ENCODE measurements at regions of chr11 and their contacts with region 1.

Region 1: GRCh38 chr11:95661162-95661561 is 128.4 kb downstream of the FAM76B start:
- DNase-seq: no peak
- H3K4me3 Mint-ChIP-seq: no peak overlapping the region
- H3K27ac Mint-ChIP-seq: no peak overlapping the region
- H3K4me1 Mint-ChIP-seq: peaks cover 27% of the 10 kb centered on the region
- H3K27me3 Mint-ChIP-seq: no peaks in the 10 kb centered on the region

Region 2: DNA sequence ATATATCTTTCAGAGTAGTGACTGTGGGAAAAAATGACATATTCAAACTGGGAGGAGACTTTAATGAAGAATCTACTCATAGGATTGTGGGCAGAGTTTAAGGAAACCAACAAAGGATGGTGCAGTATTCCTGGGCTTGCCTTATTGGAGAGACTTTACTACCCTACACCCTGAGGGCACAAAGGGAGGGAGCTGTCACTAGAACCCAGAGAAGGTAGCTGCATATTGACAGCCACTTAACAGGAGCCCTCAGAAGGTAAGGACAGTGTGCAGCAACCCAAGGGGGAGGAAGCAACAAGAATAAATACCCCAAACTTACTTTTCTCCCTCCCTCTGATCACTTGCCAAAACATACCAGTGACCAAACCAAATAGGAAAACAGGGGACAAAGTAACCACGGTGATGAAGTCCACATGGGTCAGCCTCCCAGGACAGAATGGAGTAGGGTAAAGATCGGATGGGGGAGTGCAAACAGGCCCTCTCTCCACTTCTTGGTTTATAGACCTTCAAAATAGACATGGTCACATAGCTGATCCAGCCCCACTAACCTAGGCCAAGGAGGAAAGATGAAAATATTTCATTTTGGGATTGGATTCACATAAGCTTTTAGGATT is 308.3 kb before region 1 on chr11:
- intact Hi-C with region 1: no loop called
- DNase-seq: no peak
- H3K4me3 Mint-ChIP-seq: no peak overlapping the region
- H3K27ac Mint-ChIP-seq: no peak overlapping the region
- H3K4me1 Mint-ChIP-seq: no peaks in the 10 kb centered on the region
- H3K27me3 Mint-ChIP-seq: peaks cover 19% of the 10 kb centered on the region

Region 3: DNA sequence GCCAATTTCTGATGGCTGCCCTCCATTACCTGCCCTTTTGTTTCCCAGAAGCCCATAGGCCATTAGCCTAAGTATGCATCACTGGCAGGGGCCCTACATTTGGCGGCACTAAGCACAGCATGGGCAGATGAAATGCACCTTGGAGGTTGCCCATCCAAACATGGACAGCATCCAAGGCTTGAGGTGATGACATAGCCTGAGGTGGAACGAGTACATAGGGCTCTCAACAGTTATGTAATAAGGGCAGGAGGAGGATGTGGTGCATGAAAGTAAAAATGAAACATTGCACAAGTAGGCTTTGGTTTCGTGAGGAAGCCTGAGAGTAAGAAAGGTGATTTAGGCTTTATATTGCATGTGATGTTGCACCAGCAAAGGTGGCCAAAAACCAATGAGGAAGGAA is 19.7 kb before region 1 on chr11:
- intact Hi-C with region 1: loop called (anchors 2 kb)
- DNase-seq: peak; percentile 47
- H3K4me3 Mint-ChIP-seq: no peak overlapping the region
- H3K27ac Mint-ChIP-seq: peak overlapping the region; percentile 70
- H3K4me1 Mint-ChIP-seq: peaks cover 24% of the 10 kb centered on the region
- H3K27me3 Mint-ChIP-seq: no peaks in the 10 kb centered on the region

Region 4: GRCh38 chr11:95671768-95672167 is 10.6 kb after region 1 on chr11:
- intact Hi-C with region 1: loop called (anchors 1 kb)
- DNase-seq: no peak
- H3K4me3 Mint-ChIP-seq: no peak overlapping the region
- H3K27ac Mint-ChIP-seq: no peak overlapping the region
- H3K4me1 Mint-ChIP-seq: peaks cover 27% of the 10 kb centered on the region
- H3K27me3 Mint-ChIP-seq: no peaks in the 10 kb centered on the region

Region 5: GRCh38 chr11:95688580-95689189 is 27.5 kb after region 1 on chr11:
- intact Hi-C with region 1: loop called (anchors 2 kb)
- DNase-seq: peak; percentile 34
- H3K4me3 Mint-ChIP-seq: no peak overlapping the region
- H3K27ac Mint-ChIP-seq: no peak overlapping the region
- H3K4me1 Mint-ChIP-seq: peaks cover 26% of the 10 kb centered on the region
- H3K27me3 Mint-ChIP-seq: no peaks in the 10 kb centered on the region

Region 6: DNA sequence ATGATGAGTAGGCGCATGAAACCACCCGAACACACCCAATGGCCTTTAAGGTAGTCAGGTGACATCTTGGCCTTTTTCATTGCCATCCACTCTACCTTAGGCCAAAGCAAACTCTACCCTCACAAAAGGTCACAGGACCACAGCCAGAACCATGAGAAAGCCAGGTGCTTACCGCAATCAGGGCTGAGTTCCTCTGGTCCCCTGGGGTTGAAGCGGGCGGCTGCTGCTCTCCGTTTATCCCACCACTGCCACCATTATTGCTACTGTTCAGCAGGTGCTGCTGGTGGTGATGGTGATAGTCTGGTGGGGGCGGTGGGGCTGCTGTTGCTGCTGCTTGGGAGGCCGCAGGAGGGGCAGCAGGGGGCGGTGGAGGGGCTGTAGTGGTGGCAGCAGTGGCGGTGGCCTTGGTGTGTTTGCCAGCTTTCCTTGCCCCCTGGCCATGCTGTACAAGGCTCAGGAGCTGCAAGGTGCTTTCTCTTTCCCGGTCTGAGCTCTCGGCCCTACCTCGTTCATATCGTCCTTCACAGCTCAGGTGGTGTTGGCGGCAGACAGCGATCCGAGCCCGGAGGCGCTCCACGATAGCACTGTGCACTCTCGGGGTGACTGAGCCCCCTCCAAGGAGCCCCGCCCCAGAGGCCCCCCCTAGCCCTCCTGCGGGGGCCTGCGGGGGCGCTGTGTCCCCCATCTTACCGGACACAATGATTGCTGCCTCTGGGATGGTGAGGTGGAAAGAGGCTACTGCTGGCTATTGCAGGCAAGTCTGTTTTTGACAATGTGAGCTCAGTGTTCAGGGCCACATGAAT is 680.2 kb after region 1 on chr11:
- intact Hi-C with region 1: no loop called
- DNase-seq: peak; percentile 65
- H3K4me3 Mint-ChIP-seq: peak overlapping the region; percentile 94
- H3K27ac Mint-ChIP-seq: peak overlapping the region; percentile 89
- H3K4me1 Mint-ChIP-seq: peaks cover 65% of the 10 kb centered on the region
- H3K27me3 Mint-ChIP-seq: no peaks in the 10 kb centered on the region